GM10248 (cell line): ENCODE measurements at regions of chr2 and their contacts with region 1.

Region 1: GRCh38 chr2:48467637-48468036 is 62.3 kb upstream of the STON1 start:
- DNase-seq: no peak
- CTCF ChIP-seq: no peak

Region 2: DNA sequence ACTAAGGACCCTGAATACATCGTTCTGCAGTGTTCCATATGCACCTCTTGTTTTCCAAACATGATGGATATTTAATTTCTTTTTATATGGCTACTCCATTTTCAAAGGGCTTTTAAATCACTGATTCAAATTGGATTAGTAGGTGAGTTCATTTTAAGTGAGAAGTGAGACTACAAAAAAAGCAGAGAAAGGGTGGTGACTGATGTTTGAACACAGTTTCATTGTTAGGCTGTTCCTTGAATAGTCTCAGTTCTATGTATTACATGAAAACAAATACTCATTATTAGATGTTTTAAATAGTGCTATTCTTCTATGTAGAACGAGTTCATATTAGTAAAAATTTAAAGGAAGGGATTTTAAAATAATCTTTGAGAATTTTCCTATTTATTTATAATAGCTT is 10.4 kb before region 1 on chr2:
- CTCF ChIA-PET with region 1: interaction called, 19 read pairs
- POLR2A ChIA-PET with region 1: no interaction called
- DNase-seq: no peak
- CTCF ChIP-seq: no peak

Region 3: GRCh38 chr2:48482313-48482712 is 14.7 kb after region 1 on chr2:
- CTCF ChIA-PET with region 1: interaction called, 13 read pairs
- POLR2A ChIA-PET with region 1: no interaction called
- DNase-seq: no peak
- CTCF ChIP-seq: no peak

Region 4: GRCh38 chr2:48600204-48600813 is 132.7 kb after region 1 on chr2:
- CTCF ChIA-PET with region 1: no interaction called
- POLR2A ChIA-PET with region 1: no interaction called
- DNase-seq: peak; percentile 26
- CTCF ChIP-seq: peak; percentile 69